ENCODE measurements at regions of chr2 and their contacts with region 1.

Region 1: DNA sequence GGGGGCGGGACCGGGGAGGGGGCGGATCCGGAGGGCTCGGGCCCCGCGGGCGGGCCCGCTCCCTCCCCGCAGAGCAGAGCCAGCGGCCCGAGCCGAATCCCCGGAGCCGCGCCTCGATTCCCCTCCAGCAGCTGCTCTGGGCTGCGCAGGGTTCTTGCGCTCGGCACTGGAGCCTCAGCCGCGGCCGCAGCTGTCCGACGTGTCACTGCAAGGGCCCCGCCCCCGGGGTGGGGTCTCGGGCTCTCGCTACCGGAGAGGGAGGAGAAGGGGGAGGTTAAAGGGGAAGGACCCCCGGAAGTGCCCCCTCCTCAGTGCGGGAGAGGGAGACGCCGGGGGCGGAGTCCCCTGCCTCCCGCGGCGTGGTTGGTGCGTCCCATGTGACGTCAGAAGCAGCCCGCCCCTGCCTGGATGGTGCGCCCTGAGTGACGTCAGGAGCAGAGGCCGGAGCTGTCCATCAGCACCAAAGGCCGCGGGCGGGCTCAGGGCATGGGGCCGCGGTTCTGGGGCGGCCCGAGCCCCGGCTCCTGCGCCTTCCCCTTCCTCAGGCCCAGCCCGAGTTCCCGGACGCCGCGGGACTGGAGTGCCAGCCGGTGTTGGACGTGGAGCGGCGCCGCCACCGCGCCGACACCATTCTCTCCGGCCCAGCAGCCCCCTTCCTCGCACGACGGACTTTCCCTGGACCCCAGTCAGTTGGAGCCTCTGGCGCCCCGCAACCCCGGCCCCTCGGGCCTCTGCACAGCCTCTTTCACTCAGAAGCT is at the starts of genes CHPF and TMEM198:
- DNase-seq: peak; percentile 99
- ATAC-seq: peak; percentile 95
- H3K4me3 ChIP-seq: peak within 1 kb of the TSS; percentile 41 to 68
- H3K27ac ChIP-seq: peak within 1 kb of the TSS; percentile 8 to 82
- H3K4me1 ChIP-seq: no peaks in the 10 kb centered on the region
- H3K27me3 ChIP-seq: no peaks in the 10 kb centered on the region
- total RNA-seq, gene CHPF: 75.7 to 81.2 TPM
- total RNA-seq, gene TMEM198: 1.7 to 2.3 TPM

Region 2: GRCh38 chr2:219498280-219499057 is 45.3 kb before region 1 on chr2 and contains the start of gene GMPPA:
- intact Hi-C with region 1: loop called in 1 of 2 experiments (anchors 2 kb)
- DNase-seq: peak; percentile 98
- ATAC-seq: peak; percentile 92
- H3K4me3 ChIP-seq: peak within 1 kb of the TSS; percentile 69 to 74
- H3K27ac ChIP-seq: peak within 1 kb of the TSS; percentile 37 to 94
- H3K4me1 ChIP-seq: no peaks in the 10 kb centered on the region
- H3K27me3 ChIP-seq: no peaks in the 10 kb centered on the region
- total RNA-seq, gene GMPPA: 38.5 to 42.3 TPM

Region 3: GRCh38 chr2:219509780-219510511 is 33.8 kb before region 1 on chr2:
- intact Hi-C with region 1: no loop called
- DNase-seq: peak; percentile 73 to 87
- ATAC-seq: peak; percentile 83
- H3K4me3 ChIP-seq: no peak overlapping the region
- H3K27ac ChIP-seq: no peak overlapping the region
- H3K4me1 ChIP-seq: no peaks in the 10 kb centered on the region
- H3K27me3 ChIP-seq: no peaks in the 10 kb centered on the region

Region 4: GRCh38 chr2:219597552-219598307 is 54.0 kb after region 1 on chr2 and contains the start of gene STK11IP:
- intact Hi-C with region 1: loop called in 1 of 2 experiments (anchors 5 kb)
- DNase-seq: peak; percentile 98
- ATAC-seq: peak; percentile 97
- H3K4me3 ChIP-seq: peak within 1 kb of the TSS; percentile 59 to 72
- H3K27ac ChIP-seq: peak within 1 kb of the TSS; percentile 73 to 80
- H3K4me1 ChIP-seq: peaks cover 0 to 3% of the 10 kb centered on the region in 2 donors
- H3K27me3 ChIP-seq: no peaks in the 10 kb centered on the region
- total RNA-seq, gene STK11IP: 18.5 to 29.9 TPM

Region 5: DNA sequence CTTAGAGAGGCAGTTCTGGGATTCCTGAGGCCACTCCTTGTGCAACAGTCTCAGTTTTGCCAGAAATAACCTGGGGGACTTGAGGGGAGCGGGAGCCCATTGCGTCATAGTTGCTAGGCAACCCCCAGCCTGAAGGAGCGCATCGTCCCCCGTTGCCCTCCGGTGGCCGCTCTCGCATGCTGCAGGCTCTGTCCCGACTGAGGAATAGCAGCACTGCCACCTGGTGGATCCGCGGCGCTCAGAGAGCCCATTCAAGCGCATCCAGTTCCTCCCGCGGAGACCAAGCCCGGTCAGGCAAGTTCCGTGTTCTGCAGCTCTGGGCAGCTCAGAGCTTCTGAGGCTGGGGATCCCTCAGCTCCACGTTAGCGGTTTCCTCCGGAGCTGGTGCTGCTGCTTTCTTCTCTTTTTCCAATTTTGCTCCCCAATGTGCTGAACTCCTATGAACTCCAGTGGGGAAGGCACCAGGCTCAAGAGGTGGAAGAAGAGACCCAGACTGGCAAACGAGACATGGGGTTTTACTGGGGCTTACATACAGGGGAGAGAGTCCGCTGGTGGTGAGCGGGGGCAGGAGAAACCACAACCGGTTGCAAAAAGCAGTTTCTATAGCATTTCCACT is 98.8 kb after region 1 on chr2:
- intact Hi-C with region 1: loop called (anchors 1 to 5 kb)
- DNase-seq: peak; percentile 97 to 99
- ATAC-seq: peak; percentile 95
- H3K4me3 ChIP-seq: no peak overlapping the region
- H3K27ac ChIP-seq: no peak overlapping the region
- H3K4me1 ChIP-seq: no peaks in the 10 kb centered on the region
- H3K27me3 ChIP-seq: no peaks in the 10 kb centered on the region

Region 6: DNA sequence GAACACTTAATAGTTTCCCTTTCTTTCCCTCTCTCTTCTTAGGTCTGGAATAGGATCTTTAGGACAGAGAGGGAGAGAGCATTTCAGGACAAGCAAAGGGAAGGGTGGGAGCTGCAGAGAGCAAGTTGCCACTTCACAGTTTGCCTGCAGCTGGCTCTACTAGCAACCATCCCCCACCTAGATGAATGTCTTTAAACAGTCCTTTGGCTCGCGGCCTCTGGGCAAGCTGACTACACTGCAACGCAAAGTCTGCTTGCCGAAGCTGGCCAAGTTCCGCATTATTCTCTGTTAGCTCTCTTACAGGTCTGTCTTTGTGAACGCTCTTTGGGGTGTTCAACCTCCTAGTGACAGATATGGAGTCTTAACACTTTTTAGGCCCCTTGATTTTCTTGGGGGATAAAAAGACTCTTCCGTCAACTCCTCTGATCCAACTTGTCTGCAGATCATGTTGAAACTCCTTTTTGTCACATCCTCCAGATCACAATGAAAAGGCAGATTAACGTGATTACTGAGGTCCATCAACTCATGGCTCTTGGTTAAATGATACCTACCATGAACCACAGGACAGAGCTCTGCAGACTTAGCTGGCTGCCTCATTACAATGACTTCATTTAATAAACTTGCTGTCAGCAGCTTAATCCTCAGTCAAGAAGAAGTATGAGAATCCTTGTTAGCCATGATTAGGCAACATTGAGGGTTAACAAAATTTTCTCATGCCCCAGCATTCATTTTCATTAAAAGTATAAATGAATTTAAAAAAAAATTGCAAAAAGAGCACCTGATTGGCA is 158.3 kb after region 1 on chr2:
- intact Hi-C with region 1: no loop called
- DNase-seq: peak in 1 of 2 donors; percentile 55
- ATAC-seq: no peak
- H3K4me3 ChIP-seq: no peak overlapping the region
- H3K27ac ChIP-seq: no peak overlapping the region
- H3K4me1 ChIP-seq: no peaks in the 10 kb centered on the region
- H3K27me3 ChIP-seq: peaks cover 0 to 2% of the 10 kb centered on the region in 2 donors

Measured in aorta (tissue), 5 donors.